ENCODE measurements at regions of chr7 and their contacts with region 1.

Region 1: DNA sequence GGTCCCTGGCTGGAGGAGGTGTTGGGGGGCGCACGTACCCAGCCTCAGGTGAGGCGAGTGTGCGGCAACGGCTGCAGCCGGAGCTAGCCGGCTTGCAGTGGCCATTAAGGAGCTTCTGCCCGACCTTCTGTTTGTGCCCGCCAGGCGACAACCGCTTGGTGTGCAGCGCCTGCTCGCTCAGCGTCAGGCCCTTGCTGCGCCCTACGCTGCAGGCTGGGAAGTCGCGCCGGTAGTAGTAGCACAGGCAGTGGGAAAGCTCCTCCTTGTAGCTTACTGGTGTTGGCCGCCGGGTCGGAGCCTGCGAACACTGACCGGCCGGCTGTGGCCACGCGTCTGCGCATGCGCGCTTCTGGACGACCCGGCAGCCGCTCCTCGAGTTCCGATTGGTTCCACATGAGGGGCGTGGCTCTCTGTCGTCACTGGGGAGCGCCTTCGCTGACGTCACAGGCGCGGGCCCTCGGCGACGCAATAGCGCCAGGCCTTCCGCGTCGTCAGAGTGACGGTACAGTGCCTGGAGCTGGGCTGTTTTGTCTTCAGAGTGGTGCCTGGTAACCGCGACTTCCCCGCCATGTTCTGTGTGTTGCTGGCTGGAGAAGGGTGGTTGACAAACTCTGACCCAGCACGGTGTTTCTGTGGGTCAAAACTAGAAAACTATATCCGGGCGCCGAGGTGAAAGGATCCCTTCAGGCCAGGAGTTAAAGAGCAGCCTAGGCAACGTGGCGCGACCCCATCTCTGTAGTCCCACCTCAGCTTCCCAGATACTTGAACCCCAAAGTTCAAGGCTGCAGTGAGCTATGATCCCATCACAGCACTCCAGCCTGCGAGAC is 76.3 kb upstream of the TMEM248 start:
- DNase-seq: peak; percentile 99
- H3K4me3 Mint-ChIP-seq: peak overlapping the region; percentile 98
- H3K27ac Mint-ChIP-seq: peak overlapping the region; percentile 99
- H3K4me1 Mint-ChIP-seq: peaks cover 36% of the 10 kb centered on the region
- H3K27me3 Mint-ChIP-seq: peaks cover 2% of the 10 kb centered on the region

Region 2: DNA sequence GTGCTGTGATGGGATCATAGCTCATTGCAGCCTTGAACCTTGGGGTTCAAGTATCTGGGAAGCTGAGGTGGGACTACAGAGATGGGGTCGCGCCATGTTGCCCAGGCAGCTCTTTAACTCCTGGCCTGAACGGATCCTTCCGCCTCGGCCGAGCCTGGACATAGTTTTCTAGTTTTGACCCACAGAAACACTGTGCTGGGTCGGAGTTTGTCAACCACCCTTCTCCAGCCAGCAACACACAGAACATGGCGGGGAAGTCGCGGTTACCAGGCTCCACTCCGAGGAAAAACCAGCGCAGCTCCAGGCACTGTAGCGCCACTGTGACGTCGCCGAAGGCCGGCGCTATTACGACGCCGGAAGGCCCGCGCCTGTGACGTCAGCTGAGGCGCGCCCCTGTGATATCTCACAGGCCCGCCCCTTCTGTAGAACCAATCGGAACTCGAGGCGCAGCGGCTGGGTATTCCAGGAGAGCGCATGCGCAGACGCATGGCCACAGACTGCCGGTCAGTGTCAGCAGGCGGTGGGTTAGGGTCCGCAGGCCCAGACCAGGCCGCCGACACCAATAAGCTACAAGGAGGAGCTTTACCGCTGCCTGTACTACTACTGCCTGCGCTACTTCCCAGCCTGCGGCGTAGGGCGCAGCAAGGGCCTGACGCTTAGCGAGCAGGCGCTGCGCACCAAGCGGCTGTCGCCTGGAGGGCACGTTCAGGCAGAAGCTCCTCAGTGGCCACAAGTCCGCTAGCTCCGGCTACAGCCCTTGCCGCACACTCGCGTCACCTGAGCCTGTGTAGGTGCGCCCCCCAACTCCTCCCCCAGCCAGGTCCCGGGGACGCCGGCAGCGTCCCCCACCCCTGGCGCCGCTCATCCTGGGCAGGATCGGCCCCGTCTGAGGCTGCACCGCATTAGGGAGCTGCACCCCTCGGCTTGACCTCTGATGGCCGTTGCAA is 351.3 kb before region 1 on chr7:
- CTCF ChIA-PET with region 1: interaction called, 4 read pairs
- POLR2A ChIA-PET with region 1: interaction called, 23 read pairs
- DNase-seq: peak; percentile 97
- H3K4me3 Mint-ChIP-seq: peak overlapping the region; percentile 85
- H3K27ac Mint-ChIP-seq: peak overlapping the region; percentile 93
- H3K4me1 Mint-ChIP-seq: peaks cover 15% of the 10 kb centered on the region
- H3K27me3 Mint-ChIP-seq: no peaks in the 10 kb centered on the region

Region 3: GRCh38 chr7:66757939-66758338 is 86.8 kb before region 1 on chr7:
- CTCF ChIA-PET with region 1: no interaction called
- POLR2A ChIA-PET with region 1: no interaction called
- DNase-seq: no peak
- H3K4me3 Mint-ChIP-seq: no peak overlapping the region
- H3K27ac Mint-ChIP-seq: no peak overlapping the region
- H3K4me1 Mint-ChIP-seq: peaks cover 27% of the 10 kb centered on the region
- H3K27me3 Mint-ChIP-seq: no peaks in the 10 kb centered on the region

Region 4: GRCh38 chr7:66810716-66811115 is 34.0 kb before region 1 on chr7:
- CTCF ChIA-PET with region 1: no interaction called
- POLR2A ChIA-PET with region 1: interaction called, 10 read pairs
- DNase-seq: no peak
- H3K4me3 Mint-ChIP-seq: no peak overlapping the region
- H3K27ac Mint-ChIP-seq: no peak overlapping the region
- H3K4me1 Mint-ChIP-seq: no peaks in the 10 kb centered on the region
- H3K27me3 Mint-ChIP-seq: no peaks in the 10 kb centered on the region

Region 5: GRCh38 chr7:66877577-66878300 is 33.0 kb after region 1 on chr7:
- CTCF ChIA-PET with region 1: no interaction called
- POLR2A ChIA-PET with region 1: interaction called, 14 read pairs
- DNase-seq: no peak
- H3K4me3 Mint-ChIP-seq: peak overlapping the region; percentile 12
- H3K27ac Mint-ChIP-seq: peak overlapping the region; percentile 67
- H3K4me1 Mint-ChIP-seq: peaks cover 16% of the 10 kb centered on the region
- H3K27me3 Mint-ChIP-seq: no peaks in the 10 kb centered on the region

Region 6: GRCh38 chr7:66920769-66921395 is 76.1 kb after region 1 on chr7 and contains the start of gene TMEM248:
- CTCF ChIA-PET with region 1: interaction called, 7 read pairs
- POLR2A ChIA-PET with region 1: interaction called, 53 read pairs
- DNase-seq: peak; percentile 94
- H3K4me3 Mint-ChIP-seq: peak within 1 kb of the TSS; percentile 100
- H3K27ac Mint-ChIP-seq: peak within 1 kb of the TSS; percentile 97
- H3K4me1 Mint-ChIP-seq: peaks cover 40% of the 10 kb centered on the region
- H3K27me3 Mint-ChIP-seq: peaks cover 2% of the 10 kb centered on the region
- total RNA-seq, gene TMEM248: 88.3 to 91.6 TPM

Measured in activated CD4-positive, alpha-beta memory T cell treated with anti-CD3 and anti-CD28 coated beads, Interleukin-2, amount 10 ng/mL, durations not matched to agents 7 days and 5 days (primary cell).